ENCODE measurements at regions of chr7 and their contacts with region 1.

Region 1: GRCh38 chr7:149028346-149029109 is at the start of gene PDIA4:
- DNase-seq: peak; percentile 98 to 99 (median 99)
- H3K4me3 ChIP-seq: peak within 1 kb of the TSS; percentile 70 to 76 (median 75)
- H3K4me3 Mint-ChIP-seq: peak within 1 kb of the TSS; percentile 93
- H3K27ac ChIP-seq: peak within 1 kb of the TSS; percentile 74 to 89
- H3K27ac Mint-ChIP-seq: peak within 1 kb of the TSS; percentile 78 to 96 (median 94)
- H3K4me1 ChIP-seq: peaks cover 15 to 27% of the 10 kb centered on the region in 2 donors
- H3K4me1 Mint-ChIP-seq: peaks cover 27% of the 10 kb centered on the region
- H3K27me3 ChIP-seq: no peaks in the 10 kb centered on the region
- H3K27me3 Mint-ChIP-seq: peaks cover 0 to 2% (median 2%) of the 10 kb centered on the region in 3 donors
- CTCF ChIP-seq: peak; percentile 29
- polyA plus RNA-seq, gene PDIA4: 36.5 to 51.2 (median 37.0) TPM

Region 2: GRCh38 chr7:148856891-148857290 is 171.6 kb before region 1 on chr7:
- intact Hi-C with region 1: no loop called
- DNase-seq: peak in 2 of 3 donors; percentile 19 to 90
- H3K4me3 ChIP-seq: no peak overlapping the region
- H3K4me3 Mint-ChIP-seq: no peak overlapping the region
- H3K27ac ChIP-seq: no peak overlapping the region
- H3K27ac Mint-ChIP-seq: peak overlapping the region in 3 of 7 donors; percentile 25 to 42 (median 36)
- H3K4me1 ChIP-seq: no peaks in the 10 kb centered on the region
- H3K4me1 Mint-ChIP-seq: peaks cover 14% of the 10 kb centered on the region
- H3K27me3 ChIP-seq: no peaks in the 10 kb centered on the region
- H3K27me3 Mint-ChIP-seq: no peaks in the 10 kb centered on the region
- CTCF ChIP-seq: no peak

Region 3: GRCh38 chr7:148884299-148885022 is 144.1 kb before region 1 on chr7:
- intact Hi-C with region 1: loop called in 1 of 2 experiments (anchors 5 kb)
- DNase-seq: peak; percentile 89 to 91 (median 91)
- H3K4me3 ChIP-seq: peak overlapping the region; percentile 63 to 99 (median 93)
- H3K4me3 Mint-ChIP-seq: peak overlapping the region; percentile 84 to 91
- H3K27ac ChIP-seq: peak overlapping the region; percentile 63 to 77
- H3K27ac Mint-ChIP-seq: peak overlapping the region; percentile 63 to 87 (median 77)
- H3K4me1 ChIP-seq: peaks cover 12 to 24% of the 10 kb centered on the region in 2 donors
- H3K4me1 Mint-ChIP-seq: peaks cover 22% of the 10 kb centered on the region
- H3K27me3 ChIP-seq: no peaks in the 10 kb centered on the region
- H3K27me3 Mint-ChIP-seq: peaks cover 0 to 5% (median 1%) of the 10 kb centered on the region in 3 donors
- CTCF ChIP-seq: no peak

Region 4: DNA sequence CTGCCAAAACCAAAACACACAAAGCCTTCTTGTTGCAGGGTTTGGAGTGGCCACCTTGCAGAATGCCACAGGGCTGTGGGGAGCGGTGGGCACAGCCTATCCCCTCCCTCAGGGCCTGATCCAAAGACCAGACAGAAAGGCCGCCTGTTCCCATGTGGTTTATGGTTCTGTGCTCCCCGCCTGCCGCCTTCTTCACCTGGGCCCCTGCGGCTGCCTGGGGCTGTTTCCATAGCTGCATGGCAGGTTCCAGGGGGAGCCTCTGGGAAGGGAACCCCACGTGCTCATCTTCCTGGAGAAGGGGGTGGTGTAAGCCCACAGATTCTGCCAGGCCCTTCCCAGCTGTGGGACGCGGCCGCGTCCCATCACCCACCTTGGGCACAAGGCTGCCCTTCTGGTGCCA is 73.8 kb before region 1 on chr7:
- intact Hi-C with region 1: no loop called
- DNase-seq: no peak
- H3K4me3 ChIP-seq: no peak overlapping the region
- H3K4me3 Mint-ChIP-seq: no peak overlapping the region
- H3K27ac ChIP-seq: no peak overlapping the region
- H3K27ac Mint-ChIP-seq: no peak overlapping the region
- H3K4me1 ChIP-seq: no peaks in the 10 kb centered on the region
- H3K4me1 Mint-ChIP-seq: no peaks in the 10 kb centered on the region
- H3K27me3 ChIP-seq: no peaks in the 10 kb centered on the region
- H3K27me3 Mint-ChIP-seq: peaks cover 0 to 3% (median 2%) of the 10 kb centered on the region in 3 donors
- CTCF ChIP-seq: no peak

Region 5: GRCh38 chr7:149067876-149068275 is 39.3 kb after region 1 on chr7:
- intact Hi-C with region 1: loop called in 1 of 2 experiments (anchors 5 kb)
- DNase-seq: no peak
- H3K4me3 ChIP-seq: no peak overlapping the region
- H3K4me3 Mint-ChIP-seq: no peak overlapping the region
- H3K27ac ChIP-seq: no peak overlapping the region
- H3K27ac Mint-ChIP-seq: peak overlapping the region in 1 of 7 donors; percentile 16
- H3K4me1 ChIP-seq: peaks cover 0 to 4% of the 10 kb centered on the region in 2 donors
- H3K4me1 Mint-ChIP-seq: peaks cover 8% of the 10 kb centered on the region
- H3K27me3 ChIP-seq: no peaks in the 10 kb centered on the region
- H3K27me3 Mint-ChIP-seq: peaks cover 0 to 2% (median 0%) of the 10 kb centered on the region in 3 donors
- CTCF ChIP-seq: no peak

Region 6: GRCh38 chr7:149090397-149091195 is 62.1 kb after region 1 on chr7 and contains the start of gene ZNF786:
- intact Hi-C with region 1: loop called (anchors 5 kb)
- DNase-seq: peak; percentile 80 to 83 (median 82)
- H3K4me3 ChIP-seq: peak within 1 kb of the TSS; percentile 69 to 89 (median 77)
- H3K4me3 Mint-ChIP-seq: peak within 1 kb of the TSS; percentile 99 to 100
- H3K27ac ChIP-seq: peak within 1 kb of the TSS; percentile 89
- H3K27ac Mint-ChIP-seq: peak within 1 kb of the TSS; percentile 85 to 99 (median 98)
- H3K4me1 ChIP-seq: peaks cover 47 to 60% of the 10 kb centered on the region in 2 donors
- H3K4me1 Mint-ChIP-seq: peaks cover 44% of the 10 kb centered on the region
- H3K27me3 ChIP-seq: no peaks in the 10 kb centered on the region
- H3K27me3 Mint-ChIP-seq: no peaks in the 10 kb centered on the region
- CTCF ChIP-seq: peak; percentile 92
- polyA plus RNA-seq, gene ZNF786: 0.84 to 2.6 (median 1.2) TPM

Region 7: GRCh38 chr7:149125863-149126661 is 97.5 kb after region 1 on chr7 and contains the start of gene ZNF425:
- intact Hi-C with region 1: loop called in 1 of 2 experiments (anchors 2 kb)
- DNase-seq: peak; percentile 84 to 87 (median 86)
- H3K4me3 ChIP-seq: peak within 1 kb of the TSS; percentile 74 to 98 (median 91)
- H3K4me3 Mint-ChIP-seq: peak within 1 kb of the TSS; percentile 100
- H3K27ac ChIP-seq: peak within 1 kb of the TSS; percentile 76 to 93
- H3K27ac Mint-ChIP-seq: peak within 1 kb of the TSS; percentile 92 to 98 (median 98)
- H3K4me1 ChIP-seq: peaks cover 14 to 19% of the 10 kb centered on the region in 2 donors
- H3K4me1 Mint-ChIP-seq: peaks cover 18% of the 10 kb centered on the region
- H3K27me3 ChIP-seq: no peaks in the 10 kb centered on the region
- H3K27me3 Mint-ChIP-seq: peaks cover 1 to 3% (median 3%) of the 10 kb centered on the region in 3 donors
- CTCF ChIP-seq: peak; percentile 96
- polyA plus RNA-seq, gene ZNF425: 0.15 to 0.17 TPM in 2 of 3 donors, not detected in the other

Region 8: DNA sequence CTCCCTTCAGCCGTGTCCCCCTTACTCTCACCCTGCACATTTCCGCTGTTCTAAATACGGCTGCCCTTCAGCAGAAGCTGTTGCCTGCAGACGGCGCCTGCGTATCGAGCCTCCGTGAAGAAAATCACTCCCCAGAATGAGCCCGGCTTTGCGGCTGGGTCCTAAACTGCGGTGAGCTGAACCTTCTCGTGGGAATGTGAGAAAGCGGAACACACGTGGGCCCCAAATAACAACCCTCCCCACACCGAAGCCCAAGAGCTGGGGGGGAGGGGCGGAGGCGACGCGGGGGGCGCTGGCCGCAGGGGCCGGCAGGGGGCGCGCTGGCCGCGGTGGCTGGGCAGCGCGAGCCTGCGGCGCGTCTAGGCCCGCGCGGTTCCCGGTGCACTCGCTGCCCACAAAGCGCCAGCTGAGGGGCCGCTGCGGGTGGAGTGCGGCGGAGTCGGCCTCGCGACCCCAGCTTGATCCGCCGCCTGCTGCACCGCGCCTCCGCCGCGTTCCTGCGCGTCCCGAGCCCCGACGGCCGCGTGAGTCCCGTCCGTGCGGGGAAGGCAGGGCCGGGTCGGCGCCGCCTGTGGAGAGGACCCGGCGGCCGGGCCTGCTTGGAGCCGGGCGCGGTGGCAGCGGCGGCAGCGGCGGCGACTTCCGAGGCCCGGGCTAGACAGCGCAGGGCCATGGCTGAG is 118.7 kb after region 1 on chr7 and contains the start of gene ZNF398:
- intact Hi-C with region 1: loop called in 1 of 2 experiments (anchors 5 kb)
- DNase-seq: peak; percentile 79 to 88 (median 82)
- H3K4me3 ChIP-seq: peak within 1 kb of the TSS; percentile 62 to 84 (median 82)
- H3K4me3 Mint-ChIP-seq: peak within 1 kb of the TSS; percentile 95 to 96
- H3K27ac ChIP-seq: peak within 1 kb of the TSS; percentile 62 to 86
- H3K27ac Mint-ChIP-seq: peak within 1 kb of the TSS; percentile 90 to 97 (median 93)
- H3K4me1 ChIP-seq: peaks cover 15 to 16% of the 10 kb centered on the region in 2 donors
- H3K4me1 Mint-ChIP-seq: peaks cover 26% of the 10 kb centered on the region
- H3K27me3 ChIP-seq: no peaks in the 10 kb centered on the region
- H3K27me3 Mint-ChIP-seq: no peaks in the 10 kb centered on the region
- CTCF ChIP-seq: peak; percentile 95
- polyA plus RNA-seq, gene ZNF398: 3.0 to 3.7 (median 3.1) TPM

Region 9: DNA sequence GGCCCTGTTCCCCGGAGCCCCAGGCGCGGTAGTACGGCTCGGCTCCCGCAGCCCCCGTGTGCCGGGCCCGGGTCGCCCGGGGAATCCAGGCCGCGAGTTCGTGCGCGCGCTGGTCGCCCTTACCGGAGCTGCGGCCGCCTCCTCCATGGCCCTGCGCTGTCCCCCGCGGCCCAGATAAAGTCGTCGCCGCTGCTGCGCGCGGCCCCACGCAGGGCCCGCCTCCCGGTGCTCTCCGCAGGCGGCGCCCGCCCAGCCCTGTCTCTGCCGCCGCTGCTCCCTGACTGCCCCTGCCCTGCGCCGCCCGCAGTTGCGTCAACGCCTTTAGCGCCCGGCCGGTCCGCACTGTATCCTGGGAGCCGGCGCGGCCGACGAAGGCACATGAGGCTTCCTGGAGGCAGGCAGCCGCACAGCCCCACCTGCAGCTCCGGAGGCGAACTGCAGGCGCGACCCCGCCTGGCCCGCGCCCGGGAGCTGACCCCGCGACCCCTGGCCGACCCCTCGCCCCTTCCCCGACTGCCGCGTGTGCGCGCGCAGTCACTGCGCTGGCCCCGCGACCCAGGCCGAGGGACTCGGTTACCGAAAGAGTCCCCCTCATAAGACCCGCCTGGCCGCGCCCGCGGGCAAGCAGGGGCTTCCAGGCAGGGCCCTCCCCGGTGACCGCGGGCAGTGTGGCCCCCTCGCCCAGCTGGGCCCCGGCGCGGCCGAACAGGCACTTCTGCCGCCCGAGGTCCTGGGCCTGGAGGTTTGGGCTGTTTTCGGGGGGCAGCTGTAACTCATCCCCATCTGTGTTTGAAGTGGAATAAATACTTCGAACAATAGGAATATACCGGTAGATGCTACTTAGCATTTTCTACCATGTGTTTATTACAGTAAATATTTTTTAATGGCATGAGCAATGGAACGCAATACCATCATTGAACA is 596.2 kb after region 1 on chr7:
- intact Hi-C with region 1: loop called in 1 of 2 experiments (anchors 10 kb)
- DNase-seq: peak; percentile 92 to 93 (median 93)
- H3K4me3 ChIP-seq: peak overlapping the region; percentile 75 to 94 (median 92)
- H3K4me3 Mint-ChIP-seq: peak overlapping the region; percentile 71 to 76
- H3K27ac ChIP-seq: peak overlapping the region in 1 of 2 donors; percentile 73
- H3K27ac Mint-ChIP-seq: peak overlapping the region in 5 of 7 donors; percentile 9 to 86 (median 77)
- H3K4me1 ChIP-seq: peaks cover 33 to 42% of the 10 kb centered on the region in 2 donors
- H3K4me1 Mint-ChIP-seq: peaks cover 47% of the 10 kb centered on the region
- H3K27me3 ChIP-seq: no peaks in the 10 kb centered on the region
- H3K27me3 Mint-ChIP-seq: peaks cover 2 to 10% (median 2%) of the 10 kb centered on the region in 3 donors
- CTCF ChIP-seq: peak; percentile 95